CD4-positive, alpha-beta T cell (primary cell): ENCODE measurements at regions of chr4 and their contacts with region 1.

Region 1: DNA sequence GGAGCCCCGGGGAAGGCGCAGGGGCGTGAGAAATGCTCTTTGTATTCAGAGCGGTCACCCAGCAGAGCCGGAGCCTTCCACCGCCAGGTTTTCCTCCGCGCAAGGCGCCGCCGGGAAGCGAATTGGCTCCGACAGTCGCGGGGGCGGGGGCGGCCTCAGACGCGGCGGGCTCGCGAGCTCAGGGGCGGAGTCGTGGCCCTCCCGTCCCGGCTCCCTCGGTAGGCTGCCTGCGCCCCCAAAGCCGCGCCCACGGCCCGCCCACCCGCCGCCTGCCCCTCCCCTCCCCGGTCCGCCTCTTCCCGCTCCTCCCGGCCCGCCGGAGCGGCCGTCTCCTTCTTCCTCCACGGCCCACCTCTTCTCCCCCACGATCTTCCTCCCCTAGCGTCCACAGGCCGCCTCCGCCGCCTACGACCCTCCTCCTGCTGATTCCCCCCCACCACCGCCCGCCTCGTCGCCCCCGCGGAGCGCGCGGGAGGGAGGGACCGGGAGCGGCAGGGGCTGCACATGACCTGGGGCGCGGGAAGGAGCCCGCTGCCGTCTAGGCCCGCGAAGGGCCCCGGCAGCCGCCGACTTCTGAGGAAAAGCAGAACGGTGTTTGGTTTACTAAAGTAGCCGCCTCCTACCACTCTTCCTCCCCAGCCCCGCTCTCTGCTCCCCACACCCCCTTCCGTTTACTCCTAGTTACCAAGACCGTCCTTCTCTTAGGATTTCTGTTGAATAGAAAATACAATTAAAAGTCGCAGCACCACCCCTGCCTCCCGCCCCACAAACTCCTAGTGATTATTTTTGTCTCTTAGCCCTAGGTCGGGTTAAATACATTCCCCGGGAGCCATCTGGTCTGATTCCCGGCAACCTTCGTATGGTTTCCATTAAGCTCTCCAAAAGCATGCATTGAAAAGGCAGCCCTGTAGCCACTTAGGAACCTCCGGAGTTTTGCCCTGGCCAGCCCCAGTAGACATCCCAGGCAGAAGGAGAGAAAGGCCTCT is 53.2 kb downstream of the C4orf51 start:
- DNase-seq: peak; percentile 60 to 92 (median 78)
- ATAC-seq: peak; percentile 95
- H3K4me3 ChIP-seq: peak overlapping the region; percentile 76
- H3K4me3 Mint-ChIP-seq: peak overlapping the region; percentile 89
- H3K27ac ChIP-seq: peak overlapping the region in 1 of 2 donors; percentile 35
- H3K27ac Mint-ChIP-seq: peak overlapping the region; percentile 58
- H3K4me1 ChIP-seq: peaks cover 14% of the 10 kb centered on the region
- H3K4me1 Mint-ChIP-seq: peaks cover 21% of the 10 kb centered on the region
- H3K27me3 ChIP-seq: no peaks in the 10 kb centered on the region
- H3K27me3 Mint-ChIP-seq: no peaks in the 10 kb centered on the region
- CTCF ChIP-seq: no peak

Region 2: DNA sequence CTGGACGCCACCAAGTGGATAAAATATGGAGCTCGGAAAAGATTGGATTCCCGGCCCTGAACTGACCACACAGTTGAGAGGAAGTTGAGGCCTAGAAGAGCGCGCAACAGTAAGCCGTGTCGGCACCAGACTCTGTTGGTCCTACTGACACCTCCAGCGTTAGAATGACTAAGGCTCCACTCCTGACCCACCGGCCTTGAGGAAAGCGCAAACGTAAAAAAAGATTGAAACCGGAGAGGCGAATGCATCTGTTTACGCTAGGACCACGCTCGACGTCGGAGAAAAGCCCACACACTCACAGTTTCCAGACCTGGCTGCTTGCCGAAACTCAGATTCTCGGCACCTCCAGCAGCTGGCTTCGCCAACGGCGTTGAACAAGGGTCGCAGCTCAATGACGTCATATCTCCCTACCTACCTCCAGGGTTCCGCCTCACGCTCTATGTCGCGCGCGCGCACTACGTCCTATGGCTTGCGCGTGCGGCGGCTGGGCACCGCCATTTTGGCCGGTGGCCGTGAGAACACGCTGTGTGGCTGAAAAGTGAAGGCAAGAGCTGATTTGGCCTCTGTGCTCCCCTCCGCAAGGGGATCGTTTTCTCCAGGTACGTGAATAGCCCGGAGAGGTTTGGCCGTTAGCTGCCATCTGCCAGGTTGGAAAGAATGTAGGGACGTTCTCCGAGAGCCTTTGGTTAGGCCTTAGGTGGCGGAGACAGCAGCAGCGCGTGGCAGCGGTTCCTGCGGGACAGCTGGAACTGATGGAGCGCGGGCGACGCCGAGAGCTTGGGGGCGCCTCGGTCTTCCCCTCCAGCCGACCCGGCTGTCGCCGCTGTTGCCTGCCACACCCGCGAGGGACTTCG is 635.1 kb before region 1 on chr4 and contains the starts of genes ABCE1 and ANAPC10:
- CTCF ChIA-PET with region 1: no interaction called
- POLR2A ChIA-PET with region 1: no interaction called
- intact Hi-C with region 1: loop called in 1 of 2 experiments (anchors 5 kb)
- DNase-seq: peak; percentile 88 to 100 (median 93)
- ATAC-seq: peak; percentile 89
- H3K4me3 ChIP-seq: peak within 1 kb of the TSS; percentile 93
- H3K4me3 Mint-ChIP-seq: peak within 1 kb of the TSS; percentile 95
- H3K27ac ChIP-seq: peak within 1 kb of the TSS; percentile 76 to 90
- H3K27ac Mint-ChIP-seq: peak within 1 kb of the TSS; percentile 99
- H3K4me1 ChIP-seq: peaks cover 23% of the 10 kb centered on the region
- H3K4me1 Mint-ChIP-seq: peaks cover 48% of the 10 kb centered on the region
- H3K27me3 ChIP-seq: no peaks in the 10 kb centered on the region
- H3K27me3 Mint-ChIP-seq: no peaks in the 10 kb centered on the region
- CTCF ChIP-seq: no peak
- total RNA-seq, gene ABCE1: 50.1 to 50.6 TPM
- total RNA-seq, gene ANAPC10: 25.8 to 27.5 TPM

Region 3: GRCh38 chr4:145663194-145663593 is 70.0 kb before region 1 on chr4:
- CTCF ChIA-PET with region 1: no interaction called
- POLR2A ChIA-PET with region 1: no interaction called
- intact Hi-C with region 1: no loop called
- DNase-seq: no peak
- ATAC-seq: no peak
- H3K4me3 ChIP-seq: no peak overlapping the region
- H3K4me3 Mint-ChIP-seq: no peak overlapping the region
- H3K27ac ChIP-seq: no peak overlapping the region
- H3K27ac Mint-ChIP-seq: no peak overlapping the region
- H3K4me1 ChIP-seq: no peaks in the 10 kb centered on the region
- H3K4me1 Mint-ChIP-seq: no peaks in the 10 kb centered on the region
- H3K27me3 ChIP-seq: no peaks in the 10 kb centered on the region
- H3K27me3 Mint-ChIP-seq: no peaks in the 10 kb centered on the region
- CTCF ChIP-seq: no peak

Region 4: GRCh38 chr4:145936142-145936996 is 203.2 kb after region 1 on chr4:
- CTCF ChIA-PET with region 1: no interaction called
- POLR2A ChIA-PET with region 1: interaction called, 3 read pairs
- intact Hi-C with region 1: loop called in 1 of 2 experiments (anchors 5 kb)
- DNase-seq: peak; percentile 44 to 87 (median 64)
- ATAC-seq: peak; percentile 51
- H3K4me3 ChIP-seq: peak overlapping the region; percentile 88
- H3K4me3 Mint-ChIP-seq: peak overlapping the region; percentile 98
- H3K27ac ChIP-seq: peak overlapping the region; percentile 13 to 62
- H3K27ac Mint-ChIP-seq: peak overlapping the region; percentile 90
- H3K4me1 ChIP-seq: peaks cover 16% of the 10 kb centered on the region
- H3K4me1 Mint-ChIP-seq: peaks cover 51% of the 10 kb centered on the region
- H3K27me3 ChIP-seq: no peaks in the 10 kb centered on the region
- H3K27me3 Mint-ChIP-seq: peaks cover 5% of the 10 kb centered on the region
- CTCF ChIP-seq: peak; percentile 46

Region 5: DNA sequence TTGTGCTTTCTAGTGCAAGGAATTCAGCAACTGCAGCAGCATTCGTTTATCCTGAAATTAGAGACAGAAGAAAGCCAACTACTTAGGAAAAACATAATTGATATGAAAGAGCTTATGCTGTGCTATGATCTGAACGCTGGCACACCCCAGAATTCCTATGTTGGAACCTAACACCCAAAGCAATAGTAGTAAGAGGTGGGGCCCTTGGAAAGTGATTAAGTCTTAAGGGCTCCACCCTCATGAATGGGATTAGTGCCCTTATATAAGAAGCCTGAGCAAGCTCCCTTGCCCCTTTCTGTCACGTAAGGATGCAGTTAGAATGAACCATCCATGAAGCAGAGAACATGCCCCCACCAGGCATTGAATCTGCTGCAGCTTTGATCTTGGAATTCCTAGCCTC is 437.0 kb after region 1 on chr4:
- CTCF ChIA-PET with region 1: no interaction called
- POLR2A ChIA-PET with region 1: no interaction called
- intact Hi-C with region 1: loop called in 1 of 2 experiments (anchors 5 kb)
- DNase-seq: no peak
- ATAC-seq: no peak
- H3K4me3 ChIP-seq: no peak overlapping the region
- H3K4me3 Mint-ChIP-seq: no peak overlapping the region
- H3K27ac ChIP-seq: no peak overlapping the region
- H3K27ac Mint-ChIP-seq: no peak overlapping the region
- H3K4me1 ChIP-seq: no peaks in the 10 kb centered on the region
- H3K4me1 Mint-ChIP-seq: peaks cover 12% of the 10 kb centered on the region
- H3K27me3 ChIP-seq: no peaks in the 10 kb centered on the region
- H3K27me3 Mint-ChIP-seq: peaks cover 4% of the 10 kb centered on the region
- CTCF ChIP-seq: no peak

Region 6: GRCh38 chr4:146191766-146192458 is 458.7 kb after region 1 on chr4:
- CTCF ChIA-PET with region 1: no interaction called
- POLR2A ChIA-PET with region 1: no interaction called
- intact Hi-C with region 1: no loop called
- DNase-seq: no peak
- ATAC-seq: no peak
- H3K4me3 ChIP-seq: no peak overlapping the region
- H3K4me3 Mint-ChIP-seq: no peak overlapping the region
- H3K27ac ChIP-seq: no peak overlapping the region
- H3K27ac Mint-ChIP-seq: no peak overlapping the region
- H3K4me1 ChIP-seq: no peaks in the 10 kb centered on the region
- H3K4me1 Mint-ChIP-seq: no peaks in the 10 kb centered on the region
- H3K27me3 ChIP-seq: no peaks in the 10 kb centered on the region
- H3K27me3 Mint-ChIP-seq: no peaks in the 10 kb centered on the region
- CTCF ChIP-seq: no peak